PC-3 (cell line): ENCODE measurements at regions of chr19 and their contacts with region 1.

Region 1: DNA sequence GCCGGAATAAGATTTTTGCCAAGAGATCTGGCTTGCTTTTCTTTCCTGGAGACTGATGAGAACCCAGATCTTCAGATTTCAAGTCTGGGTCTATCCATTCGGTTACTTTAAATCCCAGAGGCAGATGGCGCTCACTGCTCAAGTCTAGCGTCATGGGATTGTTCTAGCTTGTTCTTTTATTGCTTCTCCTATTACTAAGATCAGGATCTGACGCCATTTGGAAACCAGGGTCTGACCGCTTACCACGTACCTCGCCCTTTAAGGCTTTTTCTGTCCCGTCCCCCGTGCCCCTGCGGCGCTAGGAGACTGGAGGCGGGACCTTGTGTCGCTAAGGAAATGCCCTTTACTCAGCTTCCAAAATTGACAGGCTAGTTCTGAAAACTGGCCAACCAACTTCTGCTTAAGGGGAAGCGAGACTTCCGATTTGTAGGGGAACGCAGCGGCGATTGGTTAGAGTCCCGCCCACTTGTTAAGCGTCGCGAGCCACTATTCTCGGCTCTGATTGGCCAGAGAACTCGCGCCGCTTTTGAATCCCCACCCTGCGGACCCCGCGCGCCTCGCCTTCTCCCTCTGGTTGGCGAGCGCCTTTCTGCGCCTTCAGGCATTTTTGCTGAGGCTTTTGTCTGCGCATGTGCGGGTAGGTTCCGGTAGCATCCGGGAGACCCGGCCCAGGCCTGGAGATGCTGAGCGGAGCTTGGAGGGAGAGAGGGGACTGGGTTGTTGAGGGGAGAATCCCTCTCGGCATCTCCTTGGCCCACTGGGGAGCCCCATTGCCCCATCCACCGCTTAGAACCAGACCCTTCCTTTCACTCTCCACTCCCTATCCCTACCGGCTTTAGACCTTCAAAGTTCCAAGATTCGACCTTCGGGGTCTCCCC is 3.8 kb upstream of the C19orf84 start:
- DNase-seq: peak; percentile 100
- ATAC-seq: peak; percentile 93
- H3K4me3 ChIP-seq: peak overlapping the region; percentile 66
- H3K27ac ChIP-seq: peak overlapping the region; percentile 68
- H3K4me1 ChIP-seq: peaks cover 18% of the 10 kb centered on the region
- H3K27me3 ChIP-seq: no peaks in the 10 kb centered on the region
- CTCF ChIP-seq: peak; percentile 59

Region 2: GRCh38 chr19:49929611-49930482 is 1464.4 kb before region 1 on chr19:
- CTCF ChIA-PET with region 1: no interaction called
- POLR2A ChIA-PET with region 1: interaction called, 10 read pairs
- intact Hi-C with region 1: no loop called
- DNase-seq: peak; percentile 98
- ATAC-seq: peak; percentile 74
- H3K4me3 ChIP-seq: peak overlapping the region; percentile 81
- H3K27ac ChIP-seq: peak overlapping the region; percentile 92
- H3K4me1 ChIP-seq: peaks cover 59% of the 10 kb centered on the region
- H3K27me3 ChIP-seq: no peaks in the 10 kb centered on the region
- CTCF ChIP-seq: no peak

Region 3: DNA sequence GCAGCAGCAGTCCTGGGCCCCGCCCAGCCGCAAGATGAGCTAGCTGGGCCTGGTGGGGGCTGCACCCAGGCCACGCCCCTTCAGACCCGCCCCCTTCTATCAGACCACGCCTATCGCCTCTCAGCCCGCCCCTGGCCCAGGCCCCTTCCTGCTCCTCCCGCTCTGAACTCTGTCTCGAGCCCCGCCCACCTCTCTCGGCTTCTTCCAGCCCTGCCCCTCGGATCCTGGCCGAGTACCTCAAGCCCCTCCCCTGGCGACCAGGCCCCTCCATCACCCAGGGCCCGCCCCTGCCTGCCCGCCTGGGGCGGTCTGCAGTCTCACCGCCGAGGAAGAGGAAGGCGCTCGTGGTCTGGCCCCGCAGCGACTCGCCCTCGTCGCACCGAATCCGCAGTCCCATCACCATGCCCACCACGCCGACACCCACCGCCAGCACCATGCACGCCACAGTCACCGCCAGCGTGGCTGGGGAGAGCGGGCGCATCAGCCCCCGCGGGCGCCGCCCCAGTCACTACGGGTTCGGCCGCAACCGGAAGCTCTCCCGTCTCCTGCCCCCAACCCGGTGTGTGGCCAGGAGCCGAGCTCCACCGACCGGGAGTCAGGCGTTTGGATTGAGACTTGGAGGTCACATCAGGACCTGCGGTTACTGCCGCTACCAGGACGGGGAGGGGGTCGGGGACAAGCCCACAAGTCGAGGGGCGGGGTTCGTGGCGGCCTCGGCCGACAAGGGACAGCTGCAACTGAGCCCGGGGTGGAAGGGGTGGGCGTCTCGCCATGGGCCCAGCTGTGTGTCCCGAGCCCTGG is 26.4 kb before region 1 on chr19:
- CTCF ChIA-PET with region 1: no interaction called
- POLR2A ChIA-PET with region 1: interaction called, 4 read pairs
- intact Hi-C with region 1: loop called (anchors 1 kb)
- DNase-seq: peak; percentile 99
- ATAC-seq: peak; percentile 66
- H3K4me3 ChIP-seq: peak overlapping the region; percentile 87
- H3K27ac ChIP-seq: peak overlapping the region; percentile 87
- H3K4me1 ChIP-seq: peaks cover 37% of the 10 kb centered on the region
- H3K27me3 ChIP-seq: no peaks in the 10 kb centered on the region
- CTCF ChIP-seq: no peak